ENCODE measurements at regions of chr3 and their contacts with region 1.

Region 1: DNA sequence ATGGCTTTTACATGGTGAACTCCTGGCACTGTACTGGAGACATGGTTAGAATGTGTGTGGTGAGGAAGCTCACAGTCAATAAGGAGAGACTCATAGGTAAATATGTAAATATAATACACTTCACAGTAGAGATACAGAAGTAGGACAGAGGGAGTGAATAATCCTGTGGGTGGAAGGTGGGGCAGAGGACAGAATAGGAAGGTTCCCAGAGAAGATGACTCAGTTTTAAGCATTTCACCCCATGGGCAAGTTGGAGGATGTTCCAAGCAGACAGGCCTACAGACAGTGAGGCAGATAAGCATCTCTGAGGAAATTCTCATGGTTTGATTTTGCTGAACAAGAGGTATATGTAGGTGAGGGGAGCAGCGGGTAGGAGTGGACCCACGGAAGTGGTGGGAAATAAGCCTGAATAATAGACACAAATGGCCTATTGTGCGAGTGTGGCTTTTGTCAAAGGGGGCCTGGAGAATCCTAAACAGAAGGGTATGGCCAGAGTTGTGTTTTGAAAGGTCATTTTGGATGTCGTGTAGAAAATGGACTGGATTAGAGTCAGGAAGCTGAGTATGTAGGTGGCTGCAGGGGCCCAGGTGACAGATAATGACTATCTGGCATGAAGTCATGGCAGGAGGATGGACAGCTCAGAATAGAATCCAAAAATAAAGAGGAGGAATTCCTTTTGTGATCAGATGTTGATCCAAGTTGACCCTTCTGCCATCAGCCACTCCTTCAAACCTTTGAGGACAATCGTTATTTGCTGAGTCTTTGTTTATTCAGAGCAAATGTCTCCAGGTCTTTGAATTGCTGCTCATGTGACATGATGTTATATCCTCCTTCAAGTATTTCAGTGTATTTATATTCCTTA is 97.2 kb upstream of the THRB start:
- DNase-seq: peak; percentile 97
- ATAC-seq: peak; percentile 93
- H3K4me3 ChIP-seq: peak overlapping the region; percentile 19; the same call in 1 of the 2 replicates
- H3K27ac ChIP-seq: peak overlapping the region; percentile 98
- H3K4me1 ChIP-seq: peaks cover 59% of the 10 kb centered on the region
- H3K27me3 ChIP-seq: no peaks in the 10 kb centered on the region
- CTCF ChIP-seq: no peak

Region 2: GRCh38 chr3:24359645-24360462 is 232.0 kb before region 1 on chr3:
- CTCF ChIA-PET with region 1: no interaction called
- POLR2A ChIA-PET with region 1: no interaction called
- intact Hi-C with region 1: loop called (anchors 5 kb)
- DNase-seq: peak; percentile 32
- ATAC-seq: no peak
- H3K4me3 ChIP-seq: no peak overlapping the region
- H3K27ac ChIP-seq: no peak overlapping the region
- H3K4me1 ChIP-seq: peaks cover 25% of the 10 kb centered on the region
- H3K27me3 ChIP-seq: no peaks in the 10 kb centered on the region
- CTCF ChIP-seq: peak; percentile 51

Region 3: GRCh38 chr3:24389108-24390090 is 202.5 kb before region 1 on chr3:
- CTCF ChIA-PET with region 1: no interaction called
- POLR2A ChIA-PET with region 1: no interaction called
- intact Hi-C with region 1: no loop called
- DNase-seq: peak; percentile 36
- ATAC-seq: no peak
- H3K4me3 ChIP-seq: no peak overlapping the region
- H3K27ac ChIP-seq: no peak overlapping the region
- H3K4me1 ChIP-seq: peaks cover 34% of the 10 kb centered on the region
- H3K27me3 ChIP-seq: no peaks in the 10 kb centered on the region
- CTCF ChIP-seq: no peak

Region 4: DNA sequence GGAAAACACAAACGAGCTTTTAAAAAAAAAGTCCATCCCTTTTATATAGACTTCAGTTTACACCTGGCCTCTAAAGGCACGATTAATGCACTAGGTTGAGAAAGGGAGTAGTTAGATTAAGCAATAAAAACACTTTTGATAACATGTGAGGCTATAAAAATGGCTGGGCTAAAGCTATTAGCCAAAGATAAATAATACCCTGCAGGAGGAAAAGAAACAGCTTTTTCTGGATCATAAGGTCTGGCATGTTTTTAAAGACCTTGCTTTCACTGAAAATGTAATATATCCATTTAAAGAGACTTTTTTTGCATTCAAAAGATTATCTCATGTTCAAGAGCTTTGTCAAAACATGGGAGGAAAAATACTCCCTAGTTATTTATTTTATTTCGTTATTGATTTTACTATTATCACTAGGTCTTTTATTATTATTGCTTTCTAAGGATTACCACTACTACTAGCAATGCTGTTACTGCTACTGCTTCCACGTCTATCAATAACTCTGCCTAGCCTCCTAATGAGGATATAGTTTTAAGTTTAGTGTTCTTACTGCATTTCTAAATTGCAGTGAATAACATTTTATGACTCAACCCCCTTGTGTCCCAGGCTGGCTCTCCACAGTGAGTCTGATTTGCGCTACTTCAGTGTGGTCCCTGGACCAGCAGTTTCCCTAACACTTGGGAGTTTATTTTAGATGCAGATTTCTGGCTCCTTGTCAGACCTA is 190.6 kb before region 1 on chr3:
- CTCF ChIA-PET with region 1: no interaction called
- POLR2A ChIA-PET with region 1: no interaction called
- intact Hi-C with region 1: no loop called
- DNase-seq: no peak
- ATAC-seq: 0 out of 2 replicates have a peak, but pooled peaks have one; percentile 24
- H3K4me3 ChIP-seq: no peak overlapping the region
- H3K27ac ChIP-seq: no peak overlapping the region
- H3K4me1 ChIP-seq: peaks cover 7% of the 10 kb centered on the region; the same call in 1 of the 2 replicates
- H3K27me3 ChIP-seq: no peaks in the 10 kb centered on the region
- CTCF ChIP-seq: no peak

Region 5: GRCh38 chr3:24521420-24522145 is 70.3 kb before region 1 on chr3:
- CTCF ChIA-PET with region 1: interaction called, 3 read pairs
- POLR2A ChIA-PET with region 1: no interaction called
- intact Hi-C with region 1: loop called (anchors 2 kb)
- DNase-seq: peak; percentile 35
- ATAC-seq: peak; percentile 55
- H3K4me3 ChIP-seq: peak overlapping the region; percentile 74
- H3K27ac ChIP-seq: peak overlapping the region; percentile 48
- H3K4me1 ChIP-seq: peaks cover 39% of the 10 kb centered on the region
- H3K27me3 ChIP-seq: no peaks in the 10 kb centered on the region
- CTCF ChIP-seq: peak; percentile 37; the same call in 1 of the 2 replicates

Region 6: DNA sequence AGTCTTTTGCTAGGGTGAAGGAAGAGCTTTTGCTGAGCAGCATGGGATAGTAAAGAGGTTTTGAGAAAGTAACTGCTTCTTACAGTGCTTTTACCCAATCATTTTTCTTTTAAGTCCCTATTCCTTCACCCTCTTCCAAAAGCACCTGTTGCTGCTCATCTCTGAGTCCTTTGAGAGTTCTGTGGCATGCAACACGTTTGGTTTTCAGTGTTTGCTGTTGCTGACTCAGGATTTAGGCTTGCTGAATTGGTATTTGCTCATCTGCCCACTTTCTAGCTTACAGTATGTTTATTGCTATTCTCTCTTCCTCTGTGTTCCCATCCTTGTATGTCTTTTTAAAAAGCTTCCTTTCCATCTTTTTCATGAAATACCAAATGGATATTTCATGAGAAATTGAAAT is 41.3 kb before region 1 on chr3:
- CTCF ChIA-PET with region 1: no interaction called
- POLR2A ChIA-PET with region 1: no interaction called
- intact Hi-C with region 1: loop called (anchors 2 kb)
- DNase-seq: peak; percentile 89
- ATAC-seq: peak; percentile 95
- H3K4me3 ChIP-seq: no peak overlapping the region
- H3K27ac ChIP-seq: no peak overlapping the region
- H3K4me1 ChIP-seq: peaks cover 31% of the 10 kb centered on the region
- H3K27me3 ChIP-seq: no peaks in the 10 kb centered on the region
- CTCF ChIP-seq: no peak

Region 7: GRCh38 chr3:24628523-24629258 is 36.8 kb after region 1 on chr3:
- CTCF ChIA-PET with region 1: no interaction called
- POLR2A ChIA-PET with region 1: no interaction called
- intact Hi-C with region 1: loop called (anchors 2 kb)
- DNase-seq: peak; percentile 89
- ATAC-seq: peak; percentile 97
- H3K4me3 ChIP-seq: no peak overlapping the region
- H3K27ac ChIP-seq: no peak overlapping the region
- H3K4me1 ChIP-seq: peaks cover 13% of the 10 kb centered on the region
- H3K27me3 ChIP-seq: no peaks in the 10 kb centered on the region
- CTCF ChIP-seq: no peak

Region 8: DNA sequence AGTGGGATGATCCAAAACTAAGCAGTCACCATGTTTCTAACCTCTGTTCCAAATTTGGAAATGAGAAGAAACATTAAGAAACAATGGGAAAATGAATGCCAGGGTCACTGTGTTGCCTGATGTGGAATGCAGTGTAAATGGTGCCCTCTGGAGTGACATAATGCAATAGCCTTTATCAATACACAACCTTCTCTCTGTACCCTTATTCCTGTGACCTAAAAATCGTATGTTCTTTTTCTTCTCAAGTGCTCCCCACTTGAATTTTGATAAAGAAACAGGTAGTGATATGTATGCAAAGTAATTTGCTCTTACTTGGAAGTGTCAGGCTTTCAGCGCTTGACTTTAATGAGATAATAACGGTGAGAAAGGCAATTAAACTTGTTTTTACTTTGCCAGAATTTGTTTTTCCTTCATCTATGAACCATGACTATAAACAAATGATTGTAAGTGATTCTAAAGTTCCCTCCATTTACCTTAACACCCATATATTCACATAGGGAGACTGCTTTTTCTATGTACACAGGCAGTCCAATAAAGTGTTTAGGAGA is 48.5 kb after region 1 on chr3:
- CTCF ChIA-PET with region 1: no interaction called
- POLR2A ChIA-PET with region 1: no interaction called
- intact Hi-C with region 1: loop called (anchors 2 kb)
- DNase-seq: peak; percentile 74
- ATAC-seq: peak; percentile 94
- H3K4me3 ChIP-seq: no peak overlapping the region
- H3K27ac ChIP-seq: no peak overlapping the region
- H3K4me1 ChIP-seq: peaks cover 16% of the 10 kb centered on the region
- H3K27me3 ChIP-seq: no peaks in the 10 kb centered on the region
- CTCF ChIP-seq: peak; percentile 95

Region 9: DNA sequence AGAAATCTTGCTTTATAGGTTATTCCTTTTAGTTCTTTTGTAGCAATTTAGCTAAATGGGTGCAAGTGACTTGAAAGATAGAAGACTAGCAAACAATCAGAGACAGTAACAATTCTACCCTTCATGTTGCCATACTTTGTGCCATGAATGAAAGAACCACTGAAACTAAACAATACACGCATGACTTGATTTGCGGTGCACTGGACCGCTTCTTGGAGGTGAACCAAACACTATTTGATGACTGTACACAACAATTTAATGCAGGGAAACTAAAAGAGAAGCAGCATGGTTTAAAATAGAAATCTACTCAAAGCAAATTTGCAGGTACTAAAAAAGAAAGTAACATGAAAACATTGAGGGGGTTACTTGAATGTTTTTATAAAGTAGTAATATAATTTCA is 505.1 kb after region 1 on chr3:
- CTCF ChIA-PET with region 1: no interaction called
- POLR2A ChIA-PET with region 1: no interaction called
- intact Hi-C with region 1: no loop called
- DNase-seq: no peak
- ATAC-seq: no peak
- H3K4me3 ChIP-seq: no peak overlapping the region
- H3K27ac ChIP-seq: no peak overlapping the region
- H3K4me1 ChIP-seq: no peaks in the 10 kb centered on the region
- H3K27me3 ChIP-seq: peaks cover 29% of the 10 kb centered on the region
- CTCF ChIP-seq: no peak